Heart left ventricle (tissue), 16 donors: ENCODE measurements at regions of chr10 and their contacts with region 1.

Region 1: DNA sequence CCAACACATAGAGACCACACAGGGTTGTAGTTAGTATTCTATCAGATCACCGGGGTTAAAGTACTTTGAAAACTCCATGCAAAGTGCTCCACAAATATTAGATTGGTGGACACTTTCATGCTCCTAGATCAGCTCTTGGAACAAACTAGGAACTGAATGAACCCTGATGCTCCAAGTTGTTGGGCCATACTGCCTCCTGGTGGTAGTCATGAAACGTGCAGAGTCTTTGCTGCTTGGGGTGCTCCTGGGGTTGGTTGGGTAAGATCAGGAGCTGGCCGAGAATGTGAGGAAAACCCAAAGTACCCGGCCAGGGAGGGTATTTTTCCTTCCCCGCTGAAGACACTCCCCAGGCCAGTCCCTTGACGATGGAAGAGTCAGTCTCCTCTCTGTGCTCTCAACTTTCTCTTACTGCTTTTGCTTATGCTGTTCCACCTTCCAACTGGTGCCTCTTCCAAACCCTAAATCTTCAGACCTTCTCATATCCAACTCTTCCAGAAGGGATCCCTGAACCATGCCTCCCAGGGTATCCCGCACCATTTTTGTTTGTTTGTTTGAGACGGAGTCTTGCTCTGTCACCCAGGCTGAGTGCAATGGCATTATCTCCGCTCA is 920 bp upstream of the RPEL1 start:
- DNase-seq: peak in 4 of 5 donors; percentile 67 to 73 (median 71)
- ATAC-seq: peak; percentile 76 to 93 (median 88)
- H3K4me3 ChIP-seq: no peak overlapping the region
- H3K27ac ChIP-seq: no peak overlapping the region
- H3K4me1 ChIP-seq: peaks cover 0 to 25% (median 5%) of the 10 kb centered on the region in 12 donors
- H3K27me3 ChIP-seq: no peaks in the 10 kb centered on the region
- CTCF ChIP-seq: peak; percentile 79 to 92 (median 86)
- POLR2A ChIP-seq: no peak

Region 2: DNA sequence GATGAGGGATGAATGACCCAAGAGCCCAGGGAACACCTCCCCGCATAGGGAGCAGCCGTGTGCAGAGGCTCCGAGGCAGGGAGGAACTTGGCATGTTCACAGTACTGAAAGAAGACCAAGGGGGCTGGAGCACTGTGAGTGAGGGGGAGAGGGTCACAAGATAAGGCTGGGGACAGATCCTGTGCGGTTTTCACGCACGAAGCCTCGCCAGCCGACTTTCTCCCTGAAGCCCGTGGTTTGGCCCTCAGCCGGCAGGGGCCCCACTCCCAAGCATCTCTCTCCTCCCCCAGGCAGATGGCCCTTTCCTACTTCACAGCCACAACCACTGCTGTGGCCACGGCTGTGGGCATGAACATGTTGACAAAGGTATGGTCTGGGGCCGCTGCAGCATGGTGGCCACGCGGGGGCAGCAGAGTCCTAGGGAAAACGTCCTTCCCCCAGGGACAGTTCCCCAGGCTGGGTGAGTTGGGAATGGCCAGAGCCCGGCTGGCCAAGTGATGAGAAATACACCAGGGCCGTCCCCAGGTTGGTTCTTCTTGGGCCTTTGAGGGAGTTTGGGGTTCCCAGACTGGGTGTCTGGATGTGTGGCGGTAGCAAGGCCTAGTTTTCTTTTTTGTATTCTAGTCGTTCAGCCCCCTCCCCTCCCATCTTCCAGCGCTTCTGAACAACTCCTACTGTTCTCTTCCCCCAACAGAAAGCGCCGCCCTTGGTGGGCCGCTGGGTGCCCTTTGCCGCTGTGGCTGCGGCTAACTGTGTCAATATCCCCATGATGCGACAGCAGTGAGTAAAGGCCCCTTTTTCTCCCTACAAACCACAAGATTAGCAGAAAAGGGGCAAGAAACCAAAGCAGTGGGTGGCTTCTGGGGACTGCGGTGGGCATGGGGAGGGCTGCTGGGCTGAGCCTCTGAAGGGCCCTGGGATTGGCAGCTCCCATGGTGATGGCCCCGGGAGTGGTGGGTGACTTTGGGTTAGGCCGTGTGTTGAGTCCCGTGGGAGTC is 515.4 kb before region 1 on chr10:
- intact Hi-C with region 1: loop called in 6 of 10 experiments (anchors 5 to 10 kb)
- DNase-seq: peak; percentile 85 to 94 (median 88)
- ATAC-seq: peak; percentile 92 to 97 (median 95)
- H3K4me3 ChIP-seq: peak overlapping the region in 1 of 12 donors; percentile 8
- H3K27ac ChIP-seq: no peak overlapping the region
- H3K4me1 ChIP-seq: peaks cover 0 to 20% (median 6%) of the 10 kb centered on the region in 12 donors
- H3K27me3 ChIP-seq: no peaks in the 10 kb centered on the region
- CTCF ChIP-seq: peak; percentile 88 to 97 (median 93)
- POLR2A ChIP-seq: no peak

Region 3: GRCh38 chr10:102917962-102918816 is 326.6 kb before region 1 on chr10 and contains the start of gene CNNM2:
- intact Hi-C with region 1: loop called (anchors 1 to 5 kb)
- DNase-seq: peak; percentile 100
- ATAC-seq: peak; percentile 96 to 99 (median 98)
- H3K4me3 ChIP-seq: peak within 1 kb of the TSS; percentile 51 to 95 (median 86)
- H3K27ac ChIP-seq: peak within 1 kb of the TSS; percentile 26 to 91 (median 84)
- H3K4me1 ChIP-seq: peaks cover 0 to 45% (median 32%) of the 10 kb centered on the region in 12 donors
- H3K27me3 ChIP-seq: no peaks in the 10 kb centered on the region
- CTCF ChIP-seq: peak in 1 of 12 donors; percentile 11
- POLR2A ChIP-seq: peak in 1 of 2 donors; percentile 67
- total RNA-seq, gene CNNM2: 2.9 to 6.3 (median 4.1) TPM

Region 4: DNA sequence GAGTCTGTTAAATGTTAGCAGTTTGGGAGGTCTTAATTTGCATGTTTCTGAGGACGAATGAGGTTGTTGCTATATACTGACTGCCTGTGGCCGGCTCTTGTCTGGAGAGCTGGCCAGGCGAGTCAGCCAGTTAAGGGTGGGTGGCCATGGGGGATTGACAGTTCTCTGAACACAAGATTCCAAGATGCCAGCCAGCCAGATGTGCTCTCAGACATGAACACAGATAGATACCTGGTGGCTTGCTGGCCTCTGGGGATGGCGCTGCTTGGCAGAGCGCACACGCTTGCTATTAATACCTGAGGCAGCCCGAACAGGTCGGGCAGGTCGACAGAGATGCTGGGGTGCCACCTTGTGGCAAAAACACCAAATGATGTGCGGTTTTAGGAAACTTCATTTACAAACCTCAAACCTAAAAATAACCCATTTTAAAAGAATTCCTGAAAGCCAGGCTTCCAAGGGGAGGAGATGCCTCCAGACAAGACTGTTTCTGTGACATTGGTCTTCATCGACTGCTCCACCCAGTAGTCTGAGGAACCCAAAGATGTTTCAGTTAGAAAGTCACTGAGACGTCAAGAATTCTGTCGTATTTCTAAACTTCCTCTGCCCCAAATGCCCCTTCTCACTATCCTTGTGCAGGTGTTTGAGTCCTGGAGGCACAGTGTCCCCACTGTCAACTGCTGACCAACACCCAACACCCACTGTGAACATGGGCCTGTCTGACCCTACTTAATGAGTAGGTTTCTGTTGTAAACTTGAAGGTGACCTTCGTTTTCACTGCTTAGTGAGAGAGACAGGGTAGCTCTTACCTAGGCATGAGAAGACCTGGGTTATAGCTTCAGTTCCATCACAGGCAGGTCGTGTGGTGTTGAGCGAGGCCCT is 175.1 kb before region 1 on chr10:
- intact Hi-C with region 1: loop called in 3 of 10 experiments (anchors 5 to 10 kb)
- DNase-seq: peak in 4 of 5 donors; percentile 37 to 68 (median 56)
- ATAC-seq: peak; percentile 40 to 84 (median 73)
- H3K4me3 ChIP-seq: no peak overlapping the region
- H3K27ac ChIP-seq: no peak overlapping the region
- H3K4me1 ChIP-seq: peaks cover 0 to 18% (median 0%) of the 10 kb centered on the region in 12 donors
- H3K27me3 ChIP-seq: no peaks in the 10 kb centered on the region
- CTCF ChIP-seq: peak; percentile 47 to 77 (median 64)
- POLR2A ChIP-seq: no peak

Region 5: DNA sequence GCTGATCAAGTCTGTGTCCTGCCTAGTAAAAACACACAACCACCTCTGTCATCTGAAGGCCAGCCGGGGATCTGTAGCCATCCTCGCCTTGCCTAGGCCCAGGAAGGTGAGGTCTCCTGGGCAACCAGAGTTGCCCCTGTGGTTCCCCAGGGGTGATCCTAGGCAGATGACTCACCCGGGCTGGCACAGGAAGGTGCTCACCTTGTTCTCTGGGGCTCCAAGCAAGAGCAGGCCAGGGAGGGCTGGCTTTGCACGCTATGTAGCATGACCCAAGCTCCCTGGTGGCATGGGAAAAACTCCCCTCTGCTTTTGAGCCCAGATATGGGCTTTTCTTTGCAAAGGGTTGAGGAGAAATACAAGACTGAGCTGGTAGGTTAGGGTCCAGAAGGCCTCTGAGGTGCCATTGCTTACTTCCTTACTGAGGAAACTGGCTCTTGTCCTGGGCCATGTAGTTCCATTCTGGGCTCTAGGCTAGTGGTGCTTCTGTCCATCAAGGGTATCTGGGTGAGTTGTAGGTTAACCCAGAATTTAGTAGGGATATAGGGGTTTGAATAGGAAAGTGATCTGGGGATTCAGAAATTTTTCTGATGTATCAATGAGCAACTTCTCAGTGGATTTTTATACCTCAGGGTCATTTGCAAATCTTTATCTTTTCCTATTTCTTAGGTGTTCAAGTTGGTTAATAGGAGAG is 163.7 kb before region 1 on chr10:
- intact Hi-C with region 1: loop called in 1 of 10 experiments (anchors 10 kb)
- DNase-seq: no peak
- ATAC-seq: peak in 1 of 4 donors; percentile 38
- H3K4me3 ChIP-seq: no peak overlapping the region
- H3K27ac ChIP-seq: no peak overlapping the region
- H3K4me1 ChIP-seq: no peaks in the 10 kb centered on the region
- H3K27me3 ChIP-seq: no peaks in the 10 kb centered on the region
- CTCF ChIP-seq: no peak
- POLR2A ChIP-seq: no peak

Region 6: GRCh38 chr10:103096153-103096552 is 148.6 kb before region 1 on chr10:
- intact Hi-C with region 1: loop called in 7 of 10 experiments (anchors 5 to 10 kb)
- DNase-seq: no peak
- ATAC-seq: no peak
- H3K4me3 ChIP-seq: no peak overlapping the region
- H3K27ac ChIP-seq: no peak overlapping the region
- H3K4me1 ChIP-seq: no peaks in the 10 kb centered on the region
- H3K27me3 ChIP-seq: no peaks in the 10 kb centered on the region
- CTCF ChIP-seq: no peak
- POLR2A ChIP-seq: no peak

Region 7: GRCh38 chr10:103102195-103102594 is 142.6 kb before region 1 on chr10:
- intact Hi-C with region 1: loop called in 8 of 10 experiments (anchors 5 to 10 kb)
- DNase-seq: no peak
- ATAC-seq: peak; percentile 16 to 65 (median 51)
- H3K4me3 ChIP-seq: no peak overlapping the region
- H3K27ac ChIP-seq: peak overlapping the region in 1 of 12 donors; percentile 5
- H3K4me1 ChIP-seq: peaks cover 0 to 22% (median 3%) of the 10 kb centered on the region in 12 donors
- H3K27me3 ChIP-seq: no peaks in the 10 kb centered on the region
- CTCF ChIP-seq: no peak
- POLR2A ChIP-seq: no peak

Region 8: GRCh38 chr10:103528556-103528955 is 283.8 kb after region 1 on chr10:
- intact Hi-C with region 1: no loop called
- DNase-seq: no peak
- ATAC-seq: no peak
- H3K4me3 ChIP-seq: no peak overlapping the region
- H3K27ac ChIP-seq: no peak overlapping the region
- H3K4me1 ChIP-seq: peaks cover 0 to 9% (median 0%) of the 10 kb centered on the region in 12 donors
- H3K27me3 ChIP-seq: no peaks in the 10 kb centered on the region
- CTCF ChIP-seq: no peak
- POLR2A ChIP-seq: no peak